ENCODE measurements at regions of chr9 and their contacts with region 1.

Region 1: DNA sequence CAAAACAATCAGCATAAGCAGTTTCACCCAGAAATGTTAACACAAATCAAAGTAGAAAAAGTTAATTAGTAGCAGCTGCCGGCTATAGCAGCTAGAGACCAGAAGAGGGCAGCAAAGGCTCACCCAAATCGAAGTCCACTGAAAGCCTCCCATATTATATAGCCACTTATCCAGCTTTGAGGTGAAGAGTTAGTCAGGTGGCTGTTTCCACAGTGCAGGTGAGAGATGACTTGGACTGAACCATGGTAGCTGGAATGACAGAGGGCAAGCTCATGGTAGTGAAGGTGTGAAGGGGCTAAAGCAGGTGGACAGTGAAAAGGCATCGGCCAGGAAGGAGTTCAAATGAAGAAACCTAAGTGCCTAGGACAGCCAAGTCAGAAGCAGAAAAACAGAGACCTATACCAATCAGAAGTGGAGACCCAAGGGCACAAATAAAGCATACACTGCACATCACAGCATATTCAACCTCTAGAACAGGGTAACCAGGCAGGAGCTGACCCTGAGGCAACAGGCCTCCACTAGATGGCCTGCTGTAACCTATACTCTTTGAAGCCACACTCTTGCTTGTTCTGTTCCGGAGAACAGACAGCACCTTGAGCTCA is 7.2 kb upstream of the RNF38 start:
- DNase-seq: peak in 3 of 4 donors; percentile 57 to 83 (median 58)
- ATAC-seq: peak; percentile 97
- H3K4me3 ChIP-seq: no peak overlapping the region
- H3K27ac ChIP-seq: no peak overlapping the region
- H3K4me1 ChIP-seq: peaks cover 0 to 8% of the 10 kb centered on the region in 2 donors
- H3K27me3 ChIP-seq: no peaks in the 10 kb centered on the region
- CTCF ChIP-seq: peak; percentile 83 to 89

Region 2: GRCh38 chr9:36560857-36561221 is 153.6 kb after region 1 on chr9:
- intact Hi-C with region 1: loop called in 1 of 2 experiments (anchors 5 kb)
- DNase-seq: no peak
- ATAC-seq: no peak
- H3K4me3 ChIP-seq: no peak overlapping the region
- H3K27ac ChIP-seq: no peak overlapping the region
- H3K4me1 ChIP-seq: peaks cover 0 to 6% of the 10 kb centered on the region in 2 donors
- H3K27me3 ChIP-seq: no peaks in the 10 kb centered on the region
- CTCF ChIP-seq: no peak

Measured in left lung (tissue), 14 donors.